Ascending aorta (tissue), 2 donors: ENCODE measurements at regions of chr2 and their contacts with region 1.

Region 1: GRCh38 chr2:119659601-119660342 is 19.2 kb upstream of the TMEM177 start:
- DNase-seq: no peak
- H3K4me3 ChIP-seq: no peak overlapping the region
- H3K27ac ChIP-seq: no peak overlapping the region
- H3K4me1 ChIP-seq: no peaks in the 10 kb centered on the region
- H3K27me3 ChIP-seq: no peaks in the 10 kb centered on the region
- CTCF ChIP-seq: peak; percentile 70 to 93 (median 83)

Region 2: GRCh38 chr2:119592444-119592843 is 67.3 kb before region 1 on chr2:
- intact Hi-C with region 1: no loop called
- DNase-seq: no peak
- H3K4me3 ChIP-seq: no peak overlapping the region
- H3K27ac ChIP-seq: no peak overlapping the region
- H3K4me1 ChIP-seq: no peaks in the 10 kb centered on the region
- H3K27me3 ChIP-seq: no peaks in the 10 kb centered on the region
- CTCF ChIP-seq: peak in 1 of 3 experiments; percentile 14

Region 3: GRCh38 chr2:119641562-119642258 is 18.1 kb before region 1 on chr2:
- intact Hi-C with region 1: loop called (anchors 1 kb)
- DNase-seq: peak in 1 of 2 donors; percentile 81
- H3K4me3 ChIP-seq: peak overlapping the region in 1 of 2 donors; percentile 9
- H3K27ac ChIP-seq: no peak overlapping the region
- H3K4me1 ChIP-seq: peaks cover 0 to 8% of the 10 kb centered on the region in 2 donors
- H3K27me3 ChIP-seq: no peaks in the 10 kb centered on the region
- CTCF ChIP-seq: peak; percentile 66 to 96 (median 91)